ENCODE measurements at regions of chr4 and their contacts with region 1.

Region 1: DNA sequence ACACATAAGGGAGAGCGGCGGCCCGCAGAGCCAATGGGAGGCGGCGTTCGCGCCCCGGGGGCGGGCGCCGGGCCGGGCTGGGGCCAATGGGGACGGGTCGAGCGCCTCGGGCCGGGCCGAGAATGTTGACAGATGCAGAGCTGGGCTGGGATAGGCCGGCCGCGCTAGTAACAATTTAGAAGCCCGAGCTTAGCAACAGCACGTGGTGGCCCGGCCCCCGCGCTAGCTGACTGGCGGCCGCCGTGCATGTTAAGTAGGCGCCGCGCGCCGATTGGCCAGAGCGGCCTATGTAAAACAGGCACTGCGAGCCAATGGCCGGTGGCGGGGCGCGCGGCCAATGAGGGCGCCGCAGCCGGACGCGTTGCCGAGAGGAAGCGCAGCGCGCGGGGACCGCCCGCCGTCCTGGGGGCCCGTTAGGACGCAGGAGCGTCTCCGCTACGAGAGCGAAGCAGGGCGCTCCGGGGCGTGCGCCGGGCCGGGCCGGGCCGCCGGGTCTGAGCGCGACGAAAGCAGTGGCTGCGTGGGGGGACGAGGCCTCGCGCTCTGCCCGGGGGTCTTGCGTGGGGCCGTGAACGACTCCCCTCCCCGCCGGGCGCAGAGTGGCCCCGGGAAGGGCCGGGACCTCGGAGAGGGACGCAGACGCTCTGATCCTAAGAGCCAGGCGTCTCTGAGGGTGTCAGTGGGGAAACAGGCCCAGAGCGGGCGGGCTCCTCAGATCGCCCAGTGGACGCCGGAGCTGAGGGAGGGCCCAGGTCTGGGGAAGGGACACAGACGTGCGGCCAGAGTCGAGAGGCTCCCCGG is 434 bp upstream of the MXD4 start:
- DNase-seq: peak; percentile 91
- ATAC-seq: peak; percentile 97
- H3K4me3 ChIP-seq: peak overlapping the region; percentile 74
- H3K27ac ChIP-seq: peak overlapping the region; percentile 82
- H3K4me1 ChIP-seq: no peaks in the 10 kb centered on the region; the same call in 1 of the 2 replicates
- H3K27me3 ChIP-seq: no peaks in the 10 kb centered on the region
- CTCF ChIP-seq: no peak
- EP300 ChIP-seq: peak in 1 of 2 experiments; percentile 36; a peak in 1 of 4 replicates
- POLR2A ChIP-seq: peak; percentile 96
- RAD21 ChIP-seq: no peak

Region 2: DNA sequence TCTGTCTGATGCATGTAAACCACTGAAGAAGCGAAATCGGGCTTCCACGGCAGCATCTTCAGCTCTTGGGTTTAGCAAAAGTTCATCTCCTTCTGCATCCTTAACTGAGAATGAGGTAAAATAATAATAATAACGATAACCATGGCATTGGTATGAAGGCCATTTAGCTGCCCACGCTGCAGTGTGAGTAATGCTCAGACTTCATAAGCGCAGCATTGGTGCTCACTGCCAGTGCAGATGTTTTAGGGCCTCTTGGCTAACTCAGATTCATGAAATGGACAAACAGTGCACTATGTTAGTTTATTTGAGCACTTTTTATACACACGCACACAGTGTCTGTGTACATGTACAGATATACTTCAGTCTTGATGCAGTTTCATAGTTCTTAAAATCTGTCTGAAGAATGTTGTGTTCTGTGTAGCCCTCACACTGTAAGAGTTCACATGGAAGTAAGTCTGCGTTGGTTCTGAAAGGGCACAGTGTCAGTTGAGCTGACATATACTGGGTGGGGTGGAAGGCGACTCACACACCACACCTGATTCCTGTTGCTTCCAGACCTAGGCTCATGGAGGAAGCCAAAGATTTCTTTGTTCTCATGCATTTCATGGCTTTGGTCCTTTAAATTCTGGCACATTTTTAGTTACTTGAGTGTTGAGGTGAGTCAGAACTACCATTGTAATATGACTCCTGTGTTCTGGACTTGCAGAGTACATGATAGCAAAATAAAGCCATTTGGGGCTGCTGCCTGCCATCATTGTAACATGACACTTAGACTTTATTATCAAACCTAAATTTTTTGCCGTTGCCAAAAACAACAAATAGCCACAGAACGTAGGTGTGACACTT is 322.5 kb before region 1 on chr4:
- CTCF ChIA-PET with region 1: no interaction called
- POLR2A ChIA-PET with region 1: no interaction called
- RAD21 ChIA-PET with region 1: no interaction called
- SMC1A ChIA-PET with region 1: no interaction called
- in situ Hi-C with region 1: no loop called
- intact Hi-C with region 1: no loop called
- DNase-seq: no peak
- ATAC-seq: no peak
- H3K4me3 ChIP-seq: no peak overlapping the region
- H3K27ac ChIP-seq: no peak overlapping the region
- H3K4me1 ChIP-seq: no peaks in the 10 kb centered on the region
- H3K27me3 ChIP-seq: no peaks in the 10 kb centered on the region
- CTCF ChIP-seq: no peak
- EP300 ChIP-seq: no peak
- POLR2A ChIP-seq: no peak
- RAD21 ChIP-seq: no peak

Region 3: DNA sequence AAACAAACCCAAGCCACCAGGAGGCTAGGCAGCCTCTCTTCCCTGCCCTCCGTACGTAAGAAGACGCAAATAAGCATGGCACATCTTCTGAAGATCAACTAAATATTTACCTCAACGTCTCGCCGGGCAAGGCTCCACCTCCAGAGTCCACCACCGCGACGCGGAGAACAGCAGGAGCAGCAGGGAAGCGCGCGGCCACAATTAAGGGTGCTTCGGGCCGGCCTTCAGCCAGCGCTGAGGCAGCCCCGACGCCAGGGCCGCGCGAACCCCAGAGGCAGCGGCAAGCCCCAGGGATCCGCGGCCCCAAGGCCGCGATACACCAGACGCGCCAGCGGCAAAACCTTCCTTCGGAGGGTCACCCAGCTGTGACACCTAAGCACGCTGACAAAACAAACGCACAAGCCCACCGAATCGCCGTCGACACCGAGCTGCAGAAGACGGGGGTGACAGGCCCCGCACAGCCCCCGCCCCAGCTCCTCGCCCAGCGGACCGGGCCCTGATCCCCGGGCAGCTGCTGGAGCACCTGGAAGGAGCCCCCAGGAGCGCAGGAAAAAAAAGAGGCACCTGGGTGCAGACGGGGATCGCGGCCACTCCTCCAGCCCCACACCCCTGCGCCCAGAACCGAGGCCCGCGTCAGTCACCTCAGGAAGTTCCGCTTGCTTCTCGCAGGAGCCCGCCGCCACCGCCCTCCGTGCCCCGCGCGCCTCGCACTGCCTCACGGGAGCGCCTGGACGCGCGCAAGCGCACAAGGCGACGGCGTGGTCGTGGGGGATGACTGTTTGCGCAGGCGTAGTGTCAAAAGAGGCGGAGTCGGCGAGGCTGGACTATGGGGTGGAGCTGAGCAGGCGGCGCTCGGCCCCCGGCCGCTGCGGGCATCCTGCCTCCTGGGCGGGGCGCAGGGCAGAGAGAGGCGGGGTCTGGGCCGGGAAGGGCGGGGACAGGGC is 20.7 kb before region 1 on chr4 and contains the starts of genes HAUS3 and POLN:
- CTCF ChIA-PET with region 1: interaction called, 4 read pairs
- POLR2A ChIA-PET with region 1: interaction called, 19 read pairs
- RAD21 ChIA-PET with region 1: interaction called, 15 read pairs
- SMC1A ChIA-PET with region 1: interaction called, 6 read pairs
- in situ Hi-C with region 1: no loop called
- intact Hi-C with region 1: loop called (anchors 1 kb)
- DNase-seq: peak; percentile 94
- ATAC-seq: peak; percentile 95
- H3K4me3 ChIP-seq: peak within 1 kb of the TSS; percentile 78
- H3K27ac ChIP-seq: peak within 1 kb of the TSS; percentile 70
- H3K4me1 ChIP-seq: peaks cover 6% of the 10 kb centered on the region; the same call in 1 of the 2 replicates
- H3K27me3 ChIP-seq: no peaks in the 10 kb centered on the region
- CTCF ChIP-seq: no peak
- EP300 ChIP-seq: no peak
- POLR2A ChIP-seq: peak; percentile 92
- RAD21 ChIP-seq: no peak
- polyA plus RNA-seq, gene HAUS3: 4.2 to 7.3 TPM
- polyA plus RNA-seq, gene POLN: 0.09 TPM in 1 of 2 experiments, not detected in the other

Region 4: DNA sequence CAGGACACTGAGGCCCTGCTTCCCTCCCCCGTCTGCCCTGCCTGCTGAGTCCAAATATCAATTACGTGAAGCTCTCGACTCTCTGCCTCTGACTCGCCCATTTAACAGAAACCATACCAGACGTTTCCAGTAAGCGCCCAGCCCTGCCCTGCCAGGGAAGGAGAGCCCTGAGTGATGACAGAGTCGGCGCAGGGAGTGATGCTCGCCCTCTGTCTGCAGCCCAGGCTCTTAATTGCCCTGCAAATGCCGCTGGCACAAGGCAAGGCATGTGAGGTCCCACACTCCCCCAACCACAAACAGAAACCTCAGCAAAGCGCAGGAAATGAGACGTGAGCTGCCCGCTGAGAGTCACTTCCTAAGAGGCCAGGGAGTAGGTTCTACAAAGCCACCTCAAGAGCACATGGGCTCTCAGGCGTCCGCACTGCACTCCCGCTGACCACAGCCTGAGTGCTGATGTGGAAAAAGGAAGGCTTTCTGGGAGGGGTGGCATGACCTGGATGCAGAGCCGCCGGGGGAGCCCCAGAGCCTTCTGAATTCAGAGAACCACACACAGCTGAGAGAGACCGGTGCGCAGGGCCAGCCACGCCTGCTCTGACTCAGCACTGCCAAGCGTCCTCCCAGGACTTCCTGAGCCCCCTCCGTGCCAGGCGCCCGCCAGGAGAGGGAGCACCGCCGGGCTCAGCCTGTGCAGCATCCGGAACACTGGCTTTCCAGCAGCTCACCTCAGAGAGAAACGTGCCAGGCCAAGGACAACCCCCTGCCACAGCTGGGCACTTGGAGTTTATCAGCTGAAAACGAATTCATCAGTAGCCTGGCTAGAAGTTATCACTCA is 150.8 kb after region 1 on chr4:
- CTCF ChIA-PET with region 1: interaction called, 6 read pairs
- POLR2A ChIA-PET with region 1: interaction called, 11 read pairs
- RAD21 ChIA-PET with region 1: interaction called, 12 read pairs
- SMC1A ChIA-PET with region 1: interaction called, 5 read pairs
- in situ Hi-C with region 1: no loop called
- intact Hi-C with region 1: loop called (anchors 2 kb)
- DNase-seq: peak; percentile 91
- ATAC-seq: peak; percentile 81
- H3K4me3 ChIP-seq: peak overlapping the region; percentile 58
- H3K27ac ChIP-seq: peak overlapping the region; percentile 60
- H3K4me1 ChIP-seq: peaks cover 49% of the 10 kb centered on the region
- H3K27me3 ChIP-seq: peaks cover 9 to 12% of the 10 kb centered on the region in 2 experiments
- CTCF ChIP-seq: peak in 2 of 3 experiments; percentile 31 to 42; a peak in 3 of 6 replicates
- EP300 ChIP-seq: peak; percentile 19 to 56; a peak in 1 of 4 replicates
- POLR2A ChIP-seq: no peak
- RAD21 ChIP-seq: no peak

Region 5: GRCh38 chr4:2418650-2419571 is 156.6 kb after region 1 on chr4 and contains the start of gene CFAP99:
- CTCF ChIA-PET with region 1: interaction called, 6 read pairs
- POLR2A ChIA-PET with region 1: interaction called, 11 read pairs
- RAD21 ChIA-PET with region 1: interaction called, 7 read pairs
- SMC1A ChIA-PET with region 1: no interaction called
- in situ Hi-C with region 1: no loop called
- intact Hi-C with region 1: no loop called
- DNase-seq: peak; percentile 72
- ATAC-seq: peak; percentile 93
- H3K4me3 ChIP-seq: peak within 1 kb of the TSS; percentile 67
- H3K27ac ChIP-seq: no peak within 1 kb of the TSS
- H3K4me1 ChIP-seq: peaks cover 23% of the 10 kb centered on the region
- H3K27me3 ChIP-seq: peaks cover 12 to 22% of the 10 kb centered on the region in 2 experiments
- CTCF ChIP-seq: peak in 1 of 3 experiments; percentile 31; a peak in 2 of 6 replicates
- EP300 ChIP-seq: no peak
- POLR2A ChIP-seq: no peak
- RAD21 ChIP-seq: no peak
- polyA plus RNA-seq, gene CFAP99: not detected

Region 6: DNA sequence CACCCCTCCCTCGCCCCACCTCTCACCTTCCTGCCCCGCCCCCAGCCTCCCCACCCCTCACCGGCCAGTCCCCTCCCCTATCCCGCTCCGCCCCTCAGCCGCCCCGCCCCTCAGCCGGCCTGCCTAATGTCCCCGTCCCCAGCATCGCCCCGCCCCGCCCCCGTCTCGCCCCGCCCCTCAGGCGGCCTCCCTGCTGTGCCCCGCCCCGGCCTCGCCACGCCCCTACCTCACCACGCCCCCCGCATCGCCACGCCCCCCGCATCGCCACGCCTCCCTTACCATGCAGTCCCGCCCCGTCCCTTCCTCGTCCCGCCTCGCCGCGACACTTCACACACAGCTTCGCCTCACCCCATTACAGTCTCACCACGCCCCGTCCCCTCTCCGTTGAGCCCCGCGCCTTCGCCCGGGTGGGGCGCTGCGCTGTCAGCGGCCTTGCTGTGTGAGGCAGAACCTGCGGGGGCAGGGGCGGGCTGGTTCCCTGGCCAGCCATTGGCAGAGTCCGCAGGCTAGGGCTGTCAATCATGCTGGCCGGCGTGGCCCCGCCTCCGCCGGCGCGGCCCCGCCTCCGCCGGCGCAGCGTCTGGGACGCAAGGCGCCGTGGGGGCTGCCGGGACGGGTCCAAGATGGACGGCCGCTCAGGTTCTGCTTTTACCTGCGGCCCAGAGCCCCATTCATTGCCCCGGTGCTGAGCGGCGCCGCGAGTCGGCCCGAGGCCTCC is 811.9 kb after region 1 on chr4 and contains the starts of genes HTT and HTT-AS:
- CTCF ChIA-PET with region 1: no interaction called
- POLR2A ChIA-PET with region 1: no interaction called
- RAD21 ChIA-PET with region 1: no interaction called
- SMC1A ChIA-PET with region 1: no interaction called
- in situ Hi-C with region 1: no loop called
- intact Hi-C with region 1: loop called (anchors 10 kb)
- DNase-seq: peak; percentile 68
- ATAC-seq: peak; percentile 76
- H3K4me3 ChIP-seq: peak within 1 kb of the TSS; percentile 100
- H3K27ac ChIP-seq: peak within 1 kb of the TSS; percentile 94
- H3K4me1 ChIP-seq: peaks cover 7% of the 10 kb centered on the region
- H3K27me3 ChIP-seq: no peaks in the 10 kb centered on the region
- CTCF ChIP-seq: no peak
- EP300 ChIP-seq: no peak
- POLR2A ChIP-seq: peak; percentile 86
- RAD21 ChIP-seq: no peak
- polyA plus RNA-seq, gene HTT: 3.3 to 3.6 TPM
- polyA plus RNA-seq, gene HTT-AS: not detected